ENCODE measurements at regions of chr1 and their contacts with region 1.

Region 1: DNA sequence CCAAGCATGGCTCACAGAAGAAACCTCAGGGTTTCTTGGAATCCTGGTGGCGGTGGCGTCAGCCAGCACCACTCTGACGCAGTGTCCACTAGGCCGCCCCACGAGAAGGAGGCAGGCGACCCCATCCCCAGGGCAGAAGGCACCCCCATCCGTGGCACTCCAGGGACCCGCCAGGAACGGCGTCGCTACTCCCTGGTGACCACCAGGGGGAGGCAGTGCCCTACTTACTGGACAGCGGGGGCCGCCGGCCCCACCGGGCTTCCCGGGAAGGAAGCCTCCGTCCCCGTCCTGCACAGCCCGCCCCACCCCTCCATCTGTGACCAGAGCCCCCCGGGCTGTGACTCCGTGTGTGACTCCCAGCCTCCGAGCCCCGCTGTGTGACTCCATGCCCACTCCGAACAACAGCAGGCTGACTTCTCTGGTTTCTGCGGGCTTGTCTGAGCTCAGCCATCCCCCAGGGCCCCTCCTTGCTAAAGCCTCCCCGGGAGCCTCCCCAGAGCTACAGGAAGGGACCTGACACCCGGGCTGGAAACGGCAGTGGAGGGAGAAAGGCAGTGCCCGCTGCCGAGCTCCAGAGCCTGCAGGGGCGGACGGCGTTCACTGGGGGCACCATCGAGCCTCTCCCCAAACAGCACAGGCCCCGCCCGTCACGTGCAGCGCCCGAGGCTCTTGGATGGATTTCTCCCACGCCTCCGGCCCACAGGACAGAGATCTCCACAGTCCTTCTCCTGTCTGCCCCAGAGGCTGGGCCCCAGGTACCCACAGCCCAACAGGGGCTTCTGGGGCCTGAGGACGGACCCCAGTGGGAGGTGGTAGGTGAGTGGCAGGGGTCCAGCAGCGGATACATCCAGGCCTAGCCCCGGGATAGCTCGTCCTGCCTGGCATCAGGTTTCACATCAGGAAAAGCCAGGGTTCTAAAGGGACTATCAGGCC is 21.1 kb downstream of the KIF17 start:
- DNase-seq: peak; percentile 71 to 97 (median 84)

Region 2: DNA sequence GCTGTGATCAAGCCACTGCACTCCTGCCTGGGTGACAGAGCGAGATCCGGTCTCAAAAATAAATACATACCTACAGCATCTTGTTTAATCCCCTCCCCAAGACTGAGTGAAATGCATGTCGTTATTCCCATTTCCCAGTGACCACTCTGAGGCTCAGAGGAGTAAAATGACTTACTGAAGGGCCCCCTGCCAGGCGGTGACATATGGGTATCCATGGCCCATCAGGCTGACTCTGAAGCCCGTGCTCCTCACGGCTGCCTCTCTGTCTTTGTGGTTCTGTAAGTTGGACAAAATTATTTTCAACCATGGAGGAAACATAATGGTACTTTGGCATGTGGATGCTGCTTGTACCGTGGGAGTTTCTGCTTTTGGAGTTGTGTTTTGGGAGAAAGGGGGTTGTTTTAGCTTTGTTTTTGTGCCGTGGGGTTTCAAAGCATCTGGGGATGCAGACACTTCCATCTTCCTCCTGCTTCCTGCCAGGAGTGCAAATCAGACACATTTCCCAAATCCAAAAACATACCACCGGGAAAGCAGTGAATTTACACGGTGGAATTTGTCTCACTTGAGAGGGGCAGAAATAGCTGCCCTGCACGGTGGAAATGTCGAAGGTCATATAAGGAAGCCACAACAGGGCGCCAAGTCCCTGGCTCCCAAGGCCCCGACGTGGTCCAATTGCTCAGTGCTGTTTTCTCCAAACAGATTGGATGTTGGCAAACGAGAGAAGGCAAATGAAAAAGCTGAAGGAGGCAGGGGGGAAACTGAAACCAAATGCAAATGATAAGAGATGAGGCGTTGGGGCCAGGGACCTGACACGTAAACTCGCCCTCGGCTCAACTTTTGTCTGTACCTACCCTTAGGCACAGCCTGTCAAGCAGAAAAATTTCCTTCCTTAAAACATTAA is 80.5 kb before region 1 on chr1:
- intact Hi-C with region 1: no loop called
- DNase-seq: no peak

Region 3: GRCh38 chr1:20981915-20982314 is 285.3 kb after region 1 on chr1:
- intact Hi-C with region 1: loop called (anchors 10 kb)
- DNase-seq: no peak

Measured in posterior cingulate gyrus (tissue), 11 donors.